Heart left ventricle (tissue), 16 donors: ENCODE measurements at regions of chr14 and their contacts with region 1.

Region 1: GRCh38 chr14:89915114-89915878 is 39.2 kb downstream of the EFCAB11 start:
- DNase-seq: peak in 3 of 5 donors; percentile 33 to 50 (median 47)
- ATAC-seq: peak in 2 of 4 donors; percentile 61 to 80
- H3K4me3 ChIP-seq: no peak overlapping the region
- H3K27ac ChIP-seq: no peak overlapping the region
- H3K4me1 ChIP-seq: peaks cover 0 to 12% (median 0%) of the 10 kb centered on the region in 12 donors
- H3K27me3 ChIP-seq: no peaks in the 10 kb centered on the region
- CTCF ChIP-seq: peak; percentile 83 to 98 (median 96)
- POLR2A ChIP-seq: no peak

Region 2: GRCh38 chr14:88667555-88668273 is 1247.6 kb before region 1 on chr14:
- intact Hi-C with region 1: loop called in 5 of 10 experiments (anchors 5 to 10 kb)
- DNase-seq: peak in 4 of 5 donors; percentile 31 to 39 (median 37)
- ATAC-seq: peak in 3 of 4 donors; percentile 78 to 84 (median 79)
- H3K4me3 ChIP-seq: no peak overlapping the region
- H3K27ac ChIP-seq: no peak overlapping the region
- H3K4me1 ChIP-seq: peaks cover 0 to 9% (median 0%) of the 10 kb centered on the region in 12 donors
- H3K27me3 ChIP-seq: no peaks in the 10 kb centered on the region
- CTCF ChIP-seq: peak; percentile 57 to 84 (median 78)
- POLR2A ChIP-seq: no peak

Region 3: DNA sequence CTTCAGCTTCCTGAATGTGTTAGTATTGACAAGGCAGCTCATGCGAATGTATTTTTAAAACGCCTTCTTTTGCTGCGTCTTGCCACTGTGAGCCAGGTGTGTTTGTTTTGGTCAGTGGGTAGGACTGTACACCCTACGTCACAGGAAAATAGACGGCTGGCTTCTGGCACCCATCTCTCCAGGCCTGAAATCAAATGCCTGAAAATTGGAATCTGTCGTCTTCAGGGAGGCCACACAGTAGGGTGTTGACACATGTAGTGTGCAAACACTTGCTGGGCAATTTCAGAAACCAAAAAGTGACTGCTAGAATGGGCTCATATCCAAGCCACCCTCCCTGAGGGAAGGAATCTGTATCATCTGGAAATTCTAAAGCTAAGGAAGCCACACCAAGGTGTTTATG is 881.5 kb before region 1 on chr14:
- intact Hi-C with region 1: loop called in 6 of 10 experiments (anchors 2 to 5 kb)
- DNase-seq: no peak
- ATAC-seq: no peak
- H3K4me3 ChIP-seq: no peak overlapping the region
- H3K27ac ChIP-seq: no peak overlapping the region
- H3K4me1 ChIP-seq: no peaks in the 10 kb centered on the region
- H3K27me3 ChIP-seq: peaks cover 0 to 21% (median 0%) of the 10 kb centered on the region in 9 donors
- CTCF ChIP-seq: no peak
- POLR2A ChIP-seq: no peak

Region 4: DNA sequence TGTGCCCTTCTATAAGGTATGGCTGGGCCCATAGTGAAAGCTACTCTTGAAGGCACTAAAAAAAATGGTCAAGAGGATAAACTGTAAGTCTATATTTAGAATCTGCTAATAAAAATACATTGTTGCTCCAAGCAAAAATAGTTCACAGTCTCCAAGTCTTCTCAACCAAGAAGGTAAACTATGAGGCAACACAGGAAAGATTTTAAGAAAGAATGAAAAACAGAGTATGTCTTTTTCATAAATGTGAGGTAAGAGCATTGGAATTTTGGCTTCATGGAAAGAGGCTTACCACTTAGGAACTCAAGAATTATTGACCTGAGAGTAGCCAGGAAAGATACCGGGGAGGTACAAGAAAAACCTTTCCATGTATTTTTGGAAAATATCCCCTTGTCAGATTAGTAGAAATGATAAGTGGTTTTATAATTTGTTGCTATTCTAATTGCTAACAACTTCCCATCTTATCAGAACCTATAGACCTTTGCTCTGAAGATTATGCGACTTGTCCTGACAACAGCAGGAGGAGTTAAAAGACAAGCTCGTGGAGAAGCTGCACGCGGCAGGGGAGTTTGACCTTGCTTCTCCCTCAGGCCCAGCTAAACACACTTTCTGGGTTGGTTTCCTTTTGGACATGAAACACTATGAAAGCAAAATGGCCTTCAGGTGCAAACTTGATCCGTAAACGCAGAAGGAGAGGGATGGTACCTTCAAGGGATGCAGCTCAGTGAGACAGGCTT is 736.3 kb before region 1 on chr14:
- intact Hi-C with region 1: loop called in 3 of 10 experiments (anchors 10 kb)
- DNase-seq: no peak
- ATAC-seq: no peak
- H3K4me3 ChIP-seq: no peak overlapping the region
- H3K27ac ChIP-seq: peak overlapping the region in 2 of 12 donors; percentile 19 to 38
- H3K4me1 ChIP-seq: peaks cover 0 to 43% (median 27%) of the 10 kb centered on the region in 12 donors
- H3K27me3 ChIP-seq: no peaks in the 10 kb centered on the region
- CTCF ChIP-seq: no peak
- POLR2A ChIP-seq: no peak

Region 5: GRCh38 chr14:89399594-89400068 is 515.7 kb before region 1 on chr14:
- intact Hi-C with region 1: loop called in 1 of 10 experiments (anchors 10 kb)
- DNase-seq: no peak
- ATAC-seq: peak in 3 of 4 donors; percentile 58 to 63 (median 59)
- H3K4me3 ChIP-seq: peak overlapping the region in 6 of 12 donors; percentile 10 to 42 (median 14)
- H3K27ac ChIP-seq: peak overlapping the region in 4 of 12 donors; percentile 4 to 53 (median 10)
- H3K4me1 ChIP-seq: peaks cover 3 to 54% (median 32%) of the 10 kb centered on the region in 12 donors
- H3K27me3 ChIP-seq: no peaks in the 10 kb centered on the region
- CTCF ChIP-seq: no peak
- POLR2A ChIP-seq: no peak

Region 6: DNA sequence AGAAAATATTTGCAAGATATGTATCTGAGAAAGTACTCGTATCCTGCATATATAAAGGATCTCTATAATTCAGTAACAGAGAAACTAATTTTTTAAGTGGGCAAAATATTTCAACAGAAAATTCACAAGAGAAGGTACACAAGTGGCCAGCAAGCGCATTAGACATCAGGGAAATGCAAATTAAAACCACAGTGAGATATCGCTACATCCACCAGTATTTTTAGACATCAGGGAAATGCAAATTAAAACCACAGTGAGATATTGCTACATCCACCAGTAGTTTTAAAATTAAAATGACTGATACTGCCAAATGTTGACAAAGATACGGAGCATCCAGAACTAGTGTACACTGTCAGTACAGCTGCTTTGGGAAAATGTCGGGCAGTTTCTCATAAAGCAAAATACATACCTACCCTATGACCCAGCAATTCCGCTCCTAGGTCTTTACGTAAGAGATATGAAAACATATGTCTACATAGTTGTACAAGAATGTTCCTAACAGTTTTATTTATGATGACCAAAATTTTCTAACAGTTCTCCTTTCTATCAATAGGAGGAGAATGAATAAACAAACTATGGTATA is 143.7 kb after region 1 on chr14:
- intact Hi-C with region 1: no loop called
- DNase-seq: no peak
- ATAC-seq: no peak
- H3K4me3 ChIP-seq: no peak overlapping the region
- H3K27ac ChIP-seq: no peak overlapping the region
- H3K4me1 ChIP-seq: peaks cover 0 to 29% (median 17%) of the 10 kb centered on the region in 12 donors
- H3K27me3 ChIP-seq: peaks cover 9 to 89% (median 34%) of the 10 kb centered on the region in 9 donors
- CTCF ChIP-seq: no peak
- POLR2A ChIP-seq: no peak